ENCODE measurements at regions of chr22 and their contacts with region 1.

Region 1: GRCh38 chr22:29245637-29246385 is 22.0 kb downstream of the RHBDD3 start:
- DNase-seq: peak; percentile 76
- ATAC-seq: peak; percentile 89
- H3K4me3 ChIP-seq: no peak overlapping the region
- H3K4me3 Mint-ChIP-seq: no peak overlapping the region
- H3K27ac ChIP-seq: no peak overlapping the region
- H3K27ac Mint-ChIP-seq: no peak overlapping the region
- H3K4me1 ChIP-seq: peaks cover 3 to 4% of the 10 kb centered on the region in 2 donors
- H3K4me1 Mint-ChIP-seq: no peaks in the 10 kb centered on the region
- H3K27me3 ChIP-seq: peaks cover 0 to 17% (median 3%) of the 10 kb centered on the region in 4 experiments
- H3K27me3 Mint-ChIP-seq: peaks cover 20% of the 10 kb centered on the region
- CTCF ChIP-seq: peak; percentile 99

Region 2: GRCh38 chr22:28855355-28856094 is 390.3 kb before region 1 on chr22:
- CTCF ChIA-PET with region 1: interaction called, 31 read pairs
- POLR2A ChIA-PET with region 1: no interaction called
- intact Hi-C with region 1: no loop called
- DNase-seq: peak; percentile 72
- ATAC-seq: peak; percentile 61
- H3K4me3 ChIP-seq: no peak overlapping the region
- H3K4me3 Mint-ChIP-seq: no peak overlapping the region
- H3K27ac ChIP-seq: no peak overlapping the region
- H3K27ac Mint-ChIP-seq: no peak overlapping the region
- H3K4me1 ChIP-seq: no peaks in the 10 kb centered on the region
- H3K4me1 Mint-ChIP-seq: no peaks in the 10 kb centered on the region
- H3K27me3 ChIP-seq: peaks cover 0 to 5% (median 2%) of the 10 kb centered on the region in 4 experiments
- H3K27me3 Mint-ChIP-seq: peaks cover 12% of the 10 kb centered on the region
- CTCF ChIP-seq: peak; percentile 96

Region 3: DNA sequence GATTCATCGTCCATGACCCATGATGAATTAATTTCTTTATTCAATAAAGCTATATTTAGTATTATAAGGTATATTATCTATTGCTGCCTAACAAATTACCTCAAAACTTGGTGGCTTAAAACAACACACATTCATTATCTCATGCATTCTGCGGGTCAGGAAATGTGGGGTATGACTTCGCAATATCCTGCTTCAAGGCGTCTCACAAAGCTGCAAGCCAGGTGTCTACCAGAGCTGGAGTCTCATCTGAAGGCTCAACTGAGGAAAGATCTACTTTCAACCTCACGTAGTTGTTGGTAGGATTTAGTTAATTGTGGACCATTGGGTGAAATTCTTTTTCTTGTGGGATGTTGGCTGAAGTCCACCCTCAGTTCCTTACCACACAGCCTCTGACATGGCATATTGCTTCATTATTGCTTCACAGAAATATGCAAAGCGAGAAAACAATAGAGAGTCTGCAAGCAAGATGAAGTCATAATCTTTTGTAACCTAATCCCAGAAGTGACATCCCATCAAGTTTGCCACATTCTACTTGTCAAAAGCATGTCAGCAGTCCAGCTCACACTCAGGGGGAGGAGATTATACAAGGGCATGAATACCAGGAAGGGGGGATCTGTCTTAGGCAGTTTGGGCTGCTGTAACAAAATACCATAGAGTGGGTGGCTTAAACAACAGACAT is 127.9 kb before region 1 on chr22:
- CTCF ChIA-PET with region 1: interaction called, 4 read pairs
- POLR2A ChIA-PET with region 1: no interaction called
- intact Hi-C with region 1: loop called (anchors 10 kb)
- DNase-seq: no peak
- ATAC-seq: no peak
- H3K4me3 ChIP-seq: no peak overlapping the region
- H3K4me3 Mint-ChIP-seq: no peak overlapping the region
- H3K27ac ChIP-seq: no peak overlapping the region
- H3K27ac Mint-ChIP-seq: no peak overlapping the region
- H3K4me1 ChIP-seq: no peaks in the 10 kb centered on the region
- H3K4me1 Mint-ChIP-seq: no peaks in the 10 kb centered on the region
- H3K27me3 ChIP-seq: peaks cover 0 to 9% (median 0%) of the 10 kb centered on the region in 4 experiments
- H3K27me3 Mint-ChIP-seq: peaks cover 58% of the 10 kb centered on the region
- CTCF ChIP-seq: no peak

Region 4: DNA sequence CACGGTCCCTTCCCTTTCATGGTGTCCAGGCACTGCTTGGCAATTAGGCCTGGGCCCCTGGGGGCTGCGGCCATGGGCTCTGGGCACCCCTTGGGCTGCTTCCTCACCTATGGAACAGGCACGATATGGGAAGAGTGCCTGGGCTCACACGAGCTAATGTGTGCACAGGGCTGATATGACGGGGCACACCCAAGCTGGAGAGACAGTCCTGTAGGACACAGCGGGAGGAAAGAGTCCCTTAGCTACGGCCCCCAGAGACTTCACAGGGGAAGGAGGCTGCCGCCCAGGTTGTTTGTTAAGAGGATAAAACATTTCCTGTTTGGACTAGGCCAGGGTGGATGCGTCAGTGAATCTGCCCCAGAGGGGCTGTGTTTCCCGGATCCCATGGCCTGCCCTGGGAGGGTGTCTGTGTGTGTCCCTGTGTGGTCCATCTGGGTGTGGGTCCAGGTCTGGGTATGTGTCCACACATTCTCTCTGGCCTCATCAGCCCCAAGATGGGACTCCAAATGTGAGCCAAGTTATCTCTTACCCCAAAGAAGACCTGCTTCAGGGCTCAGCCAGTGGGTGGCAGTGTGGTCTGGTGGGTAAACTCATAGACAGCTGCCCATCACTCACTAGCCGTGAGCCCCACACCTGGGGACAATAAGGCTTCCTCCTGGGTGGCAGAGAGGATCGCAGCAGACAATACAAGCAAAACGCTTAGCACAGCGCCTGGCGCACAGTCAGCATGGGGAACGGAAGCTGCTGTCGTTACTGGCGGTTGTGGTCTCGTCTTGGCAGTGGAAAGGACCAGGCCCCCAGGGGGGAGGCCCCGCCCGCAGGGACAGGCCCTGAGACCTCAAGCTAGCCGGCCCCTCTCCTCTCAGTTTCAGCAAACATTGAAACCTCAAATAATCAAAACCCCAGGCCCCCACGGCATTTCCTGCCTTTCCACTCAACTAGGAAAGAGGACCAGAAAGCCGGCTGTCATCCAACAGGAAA is 43.3 kb before region 1 on chr22:
- CTCF ChIA-PET with region 1: interaction called, 24 read pairs
- POLR2A ChIA-PET with region 1: no interaction called
- intact Hi-C with region 1: no loop called
- DNase-seq: peak; percentile 56
- ATAC-seq: peak; percentile 68
- H3K4me3 ChIP-seq: no peak overlapping the region
- H3K4me3 Mint-ChIP-seq: peak overlapping the region; percentile 33
- H3K27ac ChIP-seq: no peak overlapping the region
- H3K27ac Mint-ChIP-seq: no peak overlapping the region
- H3K4me1 ChIP-seq: peaks cover 26 to 28% of the 10 kb centered on the region in 2 donors
- H3K4me1 Mint-ChIP-seq: peaks cover 28% of the 10 kb centered on the region
- H3K27me3 ChIP-seq: peaks cover 0 to 73% (median 38%) of the 10 kb centered on the region in 4 experiments
- H3K27me3 Mint-ChIP-seq: peaks cover 74% of the 10 kb centered on the region
- CTCF ChIP-seq: peak; percentile 22

Measured in B cell (primary cell).